Activated CD8-positive, alpha-beta memory T cell treated with anti-CD3 and anti-CD28 coated beads, Interleukin-2, amount 10 ng/mL, durations not matched to agents 7 days and 5 days (primary cell): ENCODE measurements at regions of chr5 and their contacts with region 1.

Region 1: GRCh38 chr5:174793684-174794328 is 69.4 kb downstream of the MSX2 start:
- DNase-seq: peak; percentile 55
- ATAC-seq: peak; percentile 42
- H3K4me3 Mint-ChIP-seq: no peak overlapping the region
- H3K27ac Mint-ChIP-seq: no peak overlapping the region
- H3K4me1 Mint-ChIP-seq: no peaks in the 10 kb centered on the region
- H3K27me3 Mint-ChIP-seq: peaks cover 19% of the 10 kb centered on the region

Region 2: GRCh38 chr5:174418928-174419796 is 374.6 kb before region 1 on chr5:
- CTCF ChIA-PET with region 1: interaction called, 19 read pairs
- DNase-seq: peak; percentile 83
- ATAC-seq: peak; percentile 72
- H3K4me3 Mint-ChIP-seq: peak overlapping the region; percentile 36
- H3K27ac Mint-ChIP-seq: no peak overlapping the region
- H3K4me1 Mint-ChIP-seq: peaks cover 5% of the 10 kb centered on the region
- H3K27me3 Mint-ChIP-seq: peaks cover 6% of the 10 kb centered on the region

Region 3: GRCh38 chr5:174849426-174849825 is 55.6 kb after region 1 on chr5:
- CTCF ChIA-PET with region 1: no interaction called
- DNase-seq: no peak
- ATAC-seq: no peak
- H3K4me3 Mint-ChIP-seq: no peak overlapping the region
- H3K27ac Mint-ChIP-seq: no peak overlapping the region
- H3K4me1 Mint-ChIP-seq: no peaks in the 10 kb centered on the region
- H3K27me3 Mint-ChIP-seq: no peaks in the 10 kb centered on the region